ENCODE measurements at regions of chr19 and their contacts with region 1.

Region 1: GRCh38 chr19:29873024-29873800 is 61.4 kb downstream of the CCNE1 start:
- DNase-seq: peak; percentile 96
- H3K4me3 ChIP-seq: peak overlapping the region; percentile 50 to 60
- H3K27ac ChIP-seq: no peak overlapping the region; a peak in 1 of 4 replicates
- H3K4me1 ChIP-seq: peaks cover 0 to 6% of the 10 kb centered on the region in 2 experiments; a peak in 1 of 4 replicates
- H3K27me3 ChIP-seq: no peaks in the 10 kb centered on the region
- CTCF ChIP-seq: peak; percentile 74
- EP300 ChIP-seq: no peak
- RAD21 ChIP-seq: peak; percentile 77

Region 2: GRCh38 chr19:29724102-29724641 is 149.0 kb before region 1 on chr19:
- CTCF ChIA-PET with region 1: interaction called, 81 read pairs
- POLR2A ChIA-PET with region 1: no interaction called
- DNase-seq: no peak
- H3K4me3 ChIP-seq: no peak overlapping the region
- H3K27ac ChIP-seq: no peak overlapping the region
- H3K4me1 ChIP-seq: no peaks in the 10 kb centered on the region; a peak in 1 of 4 replicates
- H3K27me3 ChIP-seq: no peaks in the 10 kb centered on the region; the same call in 1 of the 2 replicates
- CTCF ChIP-seq: no peak
- EP300 ChIP-seq: no peak
- RAD21 ChIP-seq: no peak

Region 3: DNA sequence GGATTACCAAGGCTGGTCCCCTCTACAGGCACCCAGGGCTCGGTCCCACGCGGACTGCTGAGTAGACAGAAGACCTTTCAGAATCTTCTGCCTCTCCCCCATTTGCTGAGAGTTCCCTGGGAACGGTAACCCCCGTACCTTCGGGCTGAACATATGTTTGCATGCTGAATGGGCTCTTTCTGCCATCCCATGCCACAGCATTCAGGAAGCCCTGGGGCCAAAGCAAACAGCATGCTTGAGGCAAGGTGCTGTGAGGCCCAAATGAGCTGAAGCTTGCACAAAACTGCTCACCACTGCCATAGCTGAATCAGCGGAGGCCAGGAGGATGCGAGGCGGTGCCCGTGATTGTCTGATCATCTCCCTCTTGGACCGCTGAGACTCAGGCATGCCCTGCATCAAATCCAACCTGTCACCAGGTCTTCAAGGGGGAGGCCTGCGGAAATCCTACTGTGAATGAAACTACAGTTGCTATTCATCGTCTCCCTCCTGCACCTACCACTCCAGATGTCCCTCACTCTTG is 141.8 kb before region 1 on chr19:
- CTCF ChIA-PET with region 1: interaction called, 81 read pairs
- POLR2A ChIA-PET with region 1: no interaction called
- DNase-seq: no peak
- H3K4me3 ChIP-seq: no peak overlapping the region
- H3K27ac ChIP-seq: no peak overlapping the region
- H3K4me1 ChIP-seq: no peaks in the 10 kb centered on the region
- H3K27me3 ChIP-seq: no peaks in the 10 kb centered on the region; the same call in 1 of the 2 replicates
- CTCF ChIP-seq: no peak
- EP300 ChIP-seq: no peak
- RAD21 ChIP-seq: no peak

Region 4: DNA sequence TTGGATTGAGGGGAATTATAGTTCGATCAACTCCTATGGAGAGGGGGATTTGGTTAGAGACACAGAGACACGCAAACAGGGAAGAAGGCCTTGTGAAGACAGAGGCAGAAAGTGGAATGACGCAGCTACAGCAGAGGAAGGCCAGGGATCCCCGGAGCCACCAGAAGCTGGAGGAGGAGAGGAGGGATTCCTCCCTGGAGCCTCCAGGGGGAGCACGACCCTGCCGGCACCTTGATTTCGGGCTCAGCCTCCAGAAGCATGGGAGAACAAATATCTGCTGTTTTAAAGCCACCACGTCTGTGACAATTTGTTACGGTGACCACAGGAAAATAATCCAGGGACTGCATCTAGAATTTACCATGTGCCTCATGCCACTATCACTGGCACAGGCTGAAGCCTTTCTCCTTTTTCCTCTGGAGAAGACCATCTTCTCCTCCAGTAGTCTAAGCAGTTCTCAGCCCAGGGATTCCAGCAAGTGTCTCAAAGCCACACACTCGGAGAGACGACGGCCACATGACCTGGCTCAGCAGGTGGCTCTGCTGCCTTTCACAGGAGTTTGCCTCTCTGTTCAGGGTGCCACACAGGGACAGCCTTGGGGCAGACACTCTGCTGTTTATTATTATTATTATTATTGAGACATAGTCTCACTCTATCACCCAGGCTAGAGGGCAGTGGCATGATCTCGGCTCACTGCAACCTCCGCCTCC is 101.4 kb before region 1 on chr19:
- CTCF ChIA-PET with region 1: interaction called, 31 read pairs
- POLR2A ChIA-PET with region 1: no interaction called
- DNase-seq: peak; percentile 86
- H3K4me3 ChIP-seq: no peak overlapping the region
- H3K27ac ChIP-seq: no peak overlapping the region
- H3K4me1 ChIP-seq: peaks cover 0 to 6% of the 10 kb centered on the region in 2 experiments; a peak in 1 of 4 replicates
- H3K27me3 ChIP-seq: no peaks in the 10 kb centered on the region
- CTCF ChIP-seq: peak; percentile 70
- EP300 ChIP-seq: no peak
- RAD21 ChIP-seq: peak; percentile 70

Region 5: GRCh38 chr19:29851769-29852521 is 21.3 kb before region 1 on chr19:
- CTCF ChIA-PET with region 1: interaction called, 51 read pairs
- POLR2A ChIA-PET with region 1: no interaction called
- DNase-seq: no peak
- H3K4me3 ChIP-seq: no peak overlapping the region
- H3K27ac ChIP-seq: no peak overlapping the region
- H3K4me1 ChIP-seq: no peaks in the 10 kb centered on the region
- H3K27me3 ChIP-seq: no peaks in the 10 kb centered on the region; the same call in 1 of the 2 replicates
- CTCF ChIP-seq: no peak
- EP300 ChIP-seq: no peak
- RAD21 ChIP-seq: no peak

Region 6: GRCh38 chr19:29858000-29858596 is 15.1 kb before region 1 on chr19:
- CTCF ChIA-PET with region 1: interaction called, 51 read pairs
- POLR2A ChIA-PET with region 1: no interaction called
- DNase-seq: peak; percentile 77
- H3K4me3 ChIP-seq: peak overlapping the region in 1 of 2 experiments; percentile 47; a peak in 1 of 4 replicates
- H3K27ac ChIP-seq: no peak overlapping the region
- H3K4me1 ChIP-seq: no peaks in the 10 kb centered on the region; a peak in 1 of 4 replicates
- H3K27me3 ChIP-seq: no peaks in the 10 kb centered on the region; the same call in 1 of the 2 replicates
- CTCF ChIP-seq: peak; percentile 56
- EP300 ChIP-seq: no peak
- RAD21 ChIP-seq: peak; percentile 51